Calu3 (cell line): ENCODE measurements at regions of chr17 and their contacts with region 1.

Region 1: DNA sequence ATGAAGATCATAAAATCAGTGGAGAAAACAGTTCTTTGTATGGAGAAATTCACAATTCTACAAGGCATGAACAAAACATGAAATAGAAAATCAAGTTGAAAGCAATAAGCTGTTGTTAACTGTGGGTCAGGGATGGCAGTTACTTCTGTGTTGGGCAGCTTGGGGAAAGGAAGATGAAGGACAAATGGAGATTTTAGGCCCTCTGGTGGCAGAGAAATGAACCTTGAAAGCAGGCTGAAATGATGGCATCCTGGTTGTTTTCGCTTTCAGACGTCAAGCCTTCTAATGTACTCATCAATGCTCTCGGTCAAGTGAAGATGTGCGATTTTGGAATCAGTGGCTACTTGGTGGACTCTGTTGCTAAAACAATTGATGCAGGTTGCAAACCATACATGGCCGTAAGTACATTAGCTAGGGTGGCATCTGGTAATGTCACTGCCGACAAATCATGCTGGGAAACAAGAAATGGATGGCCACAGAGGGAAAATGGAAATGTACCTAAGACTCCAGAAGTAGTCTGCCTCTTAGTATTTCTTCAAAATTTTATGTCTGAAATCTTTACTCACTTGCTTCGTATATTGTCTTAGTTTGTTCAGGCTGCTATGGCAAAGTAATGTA is 108.9 kb downstream of the MAP2K6 start:
- DNase-seq: peak; percentile 45
- H3K4me3 Mint-ChIP-seq: no peak overlapping the region
- H3K27ac Mint-ChIP-seq: no peak overlapping the region
- H3K4me1 Mint-ChIP-seq: no peaks in the 10 kb centered on the region
- H3K27me3 Mint-ChIP-seq: no peaks in the 10 kb centered on the region
- CTCF ChIP-seq: peak; percentile 65

Region 2: DNA sequence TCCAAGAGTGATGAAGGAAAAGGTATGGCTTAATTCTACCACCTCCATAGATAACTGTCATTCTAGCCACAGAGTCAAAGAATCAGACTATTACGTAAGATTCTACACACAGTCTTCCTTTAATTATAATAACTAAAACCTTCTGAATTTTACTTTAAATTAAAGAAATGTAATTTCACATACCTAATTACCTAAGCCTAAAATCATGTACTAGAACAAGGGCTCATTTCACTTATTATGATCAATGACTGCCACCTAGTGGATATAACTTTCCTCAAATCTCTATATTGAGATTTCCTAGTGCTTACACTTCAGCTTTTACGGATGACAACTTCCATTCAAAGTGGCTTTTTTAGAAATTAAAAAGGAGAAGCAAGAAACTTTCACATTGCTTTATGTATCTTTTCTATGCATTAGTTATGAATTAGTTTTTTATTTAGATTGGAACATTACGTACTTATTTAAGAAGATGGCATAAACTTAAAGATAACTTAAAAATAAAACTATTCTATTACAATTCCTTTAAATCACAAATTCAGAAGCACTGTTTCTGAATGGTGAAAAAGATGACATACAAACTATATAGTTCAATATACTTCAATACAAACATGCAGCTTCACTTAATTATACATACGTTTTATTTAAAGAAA is 276.5 kb before region 1 on chr17:
- CTCF ChIA-PET with region 1: no interaction called
- intact Hi-C with region 1: loop called (anchors 10 kb)
- DNase-seq: no peak
- H3K4me3 Mint-ChIP-seq: no peak overlapping the region
- H3K27ac Mint-ChIP-seq: no peak overlapping the region
- H3K4me1 Mint-ChIP-seq: no peaks in the 10 kb centered on the region
- H3K27me3 Mint-ChIP-seq: no peaks in the 10 kb centered on the region
- CTCF ChIP-seq: no peak

Region 3: DNA sequence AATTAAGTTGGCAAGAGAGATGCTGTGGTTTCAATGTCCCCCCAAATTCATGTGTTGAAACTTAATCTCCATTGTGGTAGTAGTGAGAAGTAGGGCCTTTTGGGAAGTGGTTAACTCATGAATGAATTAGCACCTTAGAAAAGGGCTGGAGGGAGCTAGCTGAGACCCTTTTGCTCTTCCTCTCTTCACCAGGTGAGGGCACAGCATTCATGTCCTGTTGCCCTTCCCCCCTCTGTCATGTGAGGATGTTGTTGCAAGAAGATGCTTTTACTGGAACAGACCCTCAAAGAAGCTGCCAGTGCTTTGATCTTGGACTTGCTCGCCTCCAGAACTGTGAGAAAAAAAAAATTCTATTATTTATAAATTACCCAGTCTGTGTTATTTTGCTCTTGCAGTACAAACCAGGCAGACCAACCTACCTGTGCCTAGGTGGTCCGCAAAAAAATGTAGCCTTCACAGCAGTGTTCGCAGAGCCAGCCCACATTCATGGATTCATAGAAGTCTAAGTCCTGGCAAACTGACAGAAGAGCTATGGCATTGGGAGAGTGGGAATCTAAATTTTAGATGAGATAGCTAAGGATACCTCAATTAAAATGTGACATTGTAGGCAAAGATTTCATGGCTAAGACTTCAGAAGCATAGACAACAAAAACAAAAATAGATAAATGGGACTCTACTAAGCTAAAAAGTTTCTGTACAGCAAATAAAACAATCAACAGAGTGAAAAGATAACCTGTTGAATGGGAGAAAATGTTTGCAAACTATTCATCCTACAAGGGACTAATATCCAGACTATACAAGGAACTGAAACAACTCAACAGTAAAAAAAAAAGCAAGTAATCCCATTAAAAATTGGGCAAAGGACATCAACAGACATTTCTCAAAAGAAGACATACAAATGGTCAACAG is 164.4 kb before region 1 on chr17:
- CTCF ChIA-PET with region 1: interaction called, 7 read pairs
- intact Hi-C with region 1: loop called (anchors 2 kb)
- DNase-seq: peak; percentile 28
- H3K4me3 Mint-ChIP-seq: no peak overlapping the region
- H3K27ac Mint-ChIP-seq: no peak overlapping the region
- H3K4me1 Mint-ChIP-seq: no peaks in the 10 kb centered on the region
- H3K27me3 Mint-ChIP-seq: no peaks in the 10 kb centered on the region
- CTCF ChIP-seq: no peak

Region 4: GRCh38 chr17:69414408-69415274 is 108.7 kb before region 1 on chr17 and contains the start of gene MAP2K6:
- CTCF ChIA-PET with region 1: interaction called, 3 read pairs
- intact Hi-C with region 1: loop called (anchors 5 kb)
- DNase-seq: peak; percentile 74
- H3K4me3 Mint-ChIP-seq: no peak within 1 kb of the TSS
- H3K27ac Mint-ChIP-seq: no peak within 1 kb of the TSS
- H3K4me1 Mint-ChIP-seq: no peaks in the 10 kb centered on the region
- H3K27me3 Mint-ChIP-seq: no peaks in the 10 kb centered on the region
- CTCF ChIP-seq: no peak
- total RNA-seq, gene MAP2K6: 8.3 and 13.0 TPM in 2 replicates

Region 5: GRCh38 chr17:70622368-70623260 is 1099.3 kb after region 1 on chr17:
- CTCF ChIA-PET with region 1: no interaction called
- intact Hi-C with region 1: loop called (anchors 5 kb)
- DNase-seq: peak; percentile 58
- H3K4me3 Mint-ChIP-seq: no peak overlapping the region
- H3K27ac Mint-ChIP-seq: no peak overlapping the region
- H3K4me1 Mint-ChIP-seq: no peaks in the 10 kb centered on the region
- H3K27me3 Mint-ChIP-seq: peaks cover under 1% of the 10 kb centered on the region
- CTCF ChIP-seq: peak; percentile 29